ENCODE measurements at regions of chr1 and their contacts with region 1.

Region 1: DNA sequence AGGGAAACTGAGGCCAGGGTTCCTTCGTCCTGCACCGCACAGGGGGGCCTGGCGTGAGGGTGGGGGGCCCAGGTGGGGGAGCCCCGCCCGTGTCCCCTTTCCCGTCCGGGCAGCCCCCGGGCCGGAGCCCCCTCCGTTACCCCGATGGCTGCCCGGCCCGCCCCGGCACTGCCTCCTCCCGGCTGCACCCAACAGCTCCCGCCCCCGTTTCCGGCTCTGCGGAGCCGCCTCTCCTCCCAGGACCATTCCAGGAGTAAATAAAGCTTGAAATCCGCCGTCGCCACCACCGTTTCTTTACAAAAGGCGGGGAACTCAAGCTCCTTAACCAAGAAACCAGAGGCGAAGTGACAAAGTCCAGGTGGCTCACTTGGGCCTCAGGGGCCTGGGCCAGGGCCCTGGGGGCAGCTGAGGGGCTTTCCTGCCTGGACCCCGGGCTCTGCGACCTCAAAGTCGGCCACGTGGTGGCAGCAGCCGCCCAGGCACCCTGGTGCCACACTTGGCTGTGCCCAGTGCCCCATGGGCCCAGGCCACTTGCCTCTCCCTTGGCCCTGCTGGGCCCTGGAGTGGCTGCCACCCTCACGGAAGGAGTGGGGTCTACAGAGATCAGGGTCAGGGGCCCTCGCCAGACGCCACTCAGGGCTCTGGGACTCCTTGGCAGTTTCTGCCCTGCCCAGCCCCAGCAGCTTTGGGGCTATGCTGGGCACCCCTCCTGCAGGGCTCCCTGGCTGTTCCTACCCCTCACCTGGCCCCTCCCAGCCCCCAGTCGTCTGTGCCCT is 514 bp upstream of the FAAP20 start:
- DNase-seq: peak; percentile 95 to 96
- ATAC-seq: peak; percentile 89
- H3K4me3 ChIP-seq: peak overlapping the region; percentile 19 to 30
- H3K27ac ChIP-seq: peak overlapping the region; percentile 10 to 38
- H3K4me1 ChIP-seq: no peaks in the 10 kb centered on the region
- H3K27me3 ChIP-seq: no peaks in the 10 kb centered on the region

Region 2: GRCh38 chr1:2163205-2163604 is 31.9 kb before region 1 on chr1:
- intact Hi-C with region 1: no loop called
- DNase-seq: no peak
- ATAC-seq: no peak
- H3K4me3 ChIP-seq: no peak overlapping the region
- H3K27ac ChIP-seq: no peak overlapping the region
- H3K4me1 ChIP-seq: no peaks in the 10 kb centered on the region
- H3K27me3 ChIP-seq: no peaks in the 10 kb centered on the region

Region 3: DNA sequence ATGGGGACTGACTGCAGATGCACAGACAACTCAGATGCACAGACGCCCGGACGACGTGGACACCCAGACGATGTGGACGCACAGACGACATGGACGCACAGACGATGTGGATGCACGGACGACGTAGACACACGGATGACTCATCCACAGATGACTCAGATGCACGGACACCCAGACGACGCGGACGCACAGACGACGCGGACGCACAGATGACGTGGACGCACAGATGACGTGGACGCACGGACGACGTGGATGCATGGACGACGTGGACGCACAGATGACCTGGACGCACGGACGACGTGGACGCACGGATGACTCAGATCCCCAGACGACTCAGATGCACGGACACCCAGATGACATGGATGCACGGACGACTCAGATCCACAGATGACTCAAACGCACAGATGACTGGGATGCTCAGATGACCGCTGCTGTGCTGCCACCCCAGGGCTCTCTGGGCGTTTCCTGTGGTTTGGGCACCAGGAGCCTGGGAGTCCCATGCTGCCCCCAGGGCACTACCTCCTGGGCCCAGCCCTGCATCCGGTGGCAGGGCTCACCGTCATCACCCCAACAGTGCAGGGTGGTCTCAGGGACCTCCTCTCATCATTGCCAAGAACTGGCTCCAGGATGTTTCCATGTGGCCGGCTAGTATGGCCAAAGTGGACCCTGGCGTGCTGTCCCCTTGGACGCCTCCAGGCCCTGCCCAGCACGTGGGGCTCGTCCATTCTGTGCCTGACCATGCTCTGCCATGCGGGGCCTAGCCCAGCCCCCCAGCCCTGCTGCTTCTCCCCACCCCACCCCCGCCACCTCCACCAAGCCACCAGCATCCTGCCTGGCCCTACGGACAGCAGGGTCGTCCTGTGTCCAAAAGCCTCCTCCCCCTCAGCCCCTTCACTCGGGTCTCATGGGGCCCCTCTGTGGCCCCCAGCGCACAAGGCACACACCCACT is 14.5 kb before region 1 on chr1:
- intact Hi-C with region 1: no loop called
- DNase-seq: no peak
- ATAC-seq: no peak
- H3K4me3 ChIP-seq: no peak overlapping the region
- H3K27ac ChIP-seq: no peak overlapping the region
- H3K4me1 ChIP-seq: no peaks in the 10 kb centered on the region
- H3K27me3 ChIP-seq: no peaks in the 10 kb centered on the region

Region 4: GRCh38 chr1:2205191-2205952 is 10.3 kb after region 1 on chr1:
- intact Hi-C with region 1: no loop called
- DNase-seq: peak; percentile 98 to 99
- ATAC-seq: peak; percentile 81
- H3K4me3 ChIP-seq: no peak overlapping the region
- H3K27ac ChIP-seq: peak overlapping the region; percentile 58 to 88
- H3K4me1 ChIP-seq: no peaks in the 10 kb centered on the region
- H3K27me3 ChIP-seq: no peaks in the 10 kb centered on the region

Region 5: DNA sequence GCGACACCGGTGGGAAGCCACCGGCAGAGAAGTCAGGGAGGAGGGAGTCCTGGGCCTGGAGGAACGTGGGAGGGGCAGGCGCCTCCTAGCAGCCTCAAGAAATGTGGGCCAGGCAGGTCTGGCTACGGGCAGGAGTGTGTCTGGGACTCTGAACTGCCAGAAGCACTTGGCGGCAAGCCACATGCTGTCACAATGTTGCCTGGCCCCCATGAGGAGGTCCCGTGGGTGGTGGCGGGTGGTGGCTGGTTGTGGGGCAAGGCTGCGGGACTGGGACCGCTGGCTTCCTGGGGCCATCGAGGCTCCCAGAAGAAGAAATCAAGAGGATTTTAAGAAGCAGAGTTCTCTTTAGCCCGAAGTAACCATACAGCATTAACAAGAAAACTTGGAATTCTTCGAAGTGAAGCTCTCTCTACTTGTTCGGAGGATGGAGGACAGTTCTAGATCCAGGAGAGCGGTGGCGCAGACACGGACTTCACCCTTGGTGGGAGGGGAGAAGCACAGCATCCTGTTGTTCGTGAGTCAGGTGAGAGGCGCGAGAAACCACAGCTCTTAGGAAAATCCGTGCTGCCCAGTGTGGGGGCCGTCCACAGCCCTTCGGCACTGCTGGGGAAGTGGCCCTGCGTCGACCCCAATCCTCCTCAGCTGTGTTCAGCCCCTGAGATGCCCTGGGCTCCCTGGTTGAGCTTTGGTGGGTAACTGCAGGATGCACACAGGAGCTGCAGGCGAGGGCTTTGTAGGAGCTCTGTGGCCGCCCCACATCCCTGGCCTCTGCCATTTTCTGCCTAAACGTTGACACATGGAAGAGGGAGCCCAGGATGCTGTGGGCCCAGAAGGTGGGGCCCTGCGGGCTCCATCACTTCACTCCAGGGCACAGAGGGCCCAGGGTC is 45.4 kb after region 1 on chr1:
- intact Hi-C with region 1: loop called (anchors 2 to 5 kb)
- DNase-seq: peak; percentile 90 to 93
- ATAC-seq: peak; percentile 54
- H3K4me3 ChIP-seq: no peak overlapping the region
- H3K27ac ChIP-seq: peak overlapping the region in 1 of 2 donors; percentile 11
- H3K4me1 ChIP-seq: peaks cover 0 to 2% of the 10 kb centered on the region in 2 donors
- H3K27me3 ChIP-seq: no peaks in the 10 kb centered on the region

Region 6: GRCh38 chr1:2255420-2256369 is 60.6 kb after region 1 on chr1:
- intact Hi-C with region 1: no loop called
- DNase-seq: no peak
- ATAC-seq: peak; percentile 39
- H3K4me3 ChIP-seq: no peak overlapping the region
- H3K27ac ChIP-seq: peak overlapping the region in 1 of 2 donors; percentile 65
- H3K4me1 ChIP-seq: no peaks in the 10 kb centered on the region
- H3K27me3 ChIP-seq: no peaks in the 10 kb centered on the region

Region 7: DNA sequence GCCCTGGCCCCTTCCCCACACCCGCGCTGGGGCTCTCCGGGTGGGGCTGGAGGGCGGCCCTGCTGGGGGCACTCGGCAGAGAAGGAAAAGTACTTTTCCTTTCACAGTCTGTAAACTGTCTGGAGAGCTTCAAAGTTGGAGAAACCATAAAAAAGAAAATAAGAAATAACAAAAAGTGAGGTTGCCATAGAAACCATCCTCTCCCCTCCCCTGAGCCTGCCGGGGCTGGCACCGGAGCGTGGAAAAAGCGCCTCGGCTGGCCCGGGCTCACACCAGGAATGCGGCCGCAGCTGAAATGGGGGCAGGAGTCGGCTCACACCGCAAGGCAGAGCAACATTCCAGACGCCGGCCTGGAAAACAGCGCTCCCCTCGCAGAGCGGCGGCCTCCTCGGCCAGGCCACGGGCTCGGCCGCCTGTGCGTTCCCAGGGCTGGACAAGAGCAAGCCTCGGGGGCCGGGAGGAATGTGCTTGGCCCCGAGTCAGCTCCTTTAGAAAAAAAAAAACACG is 127.0 kb after region 1 on chr1:
- intact Hi-C with region 1: loop called (anchors 5 kb)
- DNase-seq: peak; percentile 94 to 96
- ATAC-seq: peak; percentile 89
- H3K4me3 ChIP-seq: no peak overlapping the region
- H3K27ac ChIP-seq: peak overlapping the region; percentile 83 to 90
- H3K4me1 ChIP-seq: no peaks in the 10 kb centered on the region
- H3K27me3 ChIP-seq: no peaks in the 10 kb centered on the region

Region 8: GRCh38 chr1:2525920-2526823 is 331.1 kb after region 1 on chr1 and contains the start of gene PANK4:
- intact Hi-C with region 1: loop called in 1 of 2 experiments (anchors 5 kb)
- DNase-seq: peak; percentile 96
- ATAC-seq: peak; percentile 93
- H3K4me3 ChIP-seq: peak within 1 kb of the TSS; percentile 43 to 81
- H3K27ac ChIP-seq: peak within 1 kb of the TSS in 1 of 2 donors; percentile 35
- H3K4me1 ChIP-seq: no peaks in the 10 kb centered on the region
- H3K27me3 ChIP-seq: no peaks in the 10 kb centered on the region
- total RNA-seq, gene PANK4: 19.6 to 28.2 TPM

Region 9: DNA sequence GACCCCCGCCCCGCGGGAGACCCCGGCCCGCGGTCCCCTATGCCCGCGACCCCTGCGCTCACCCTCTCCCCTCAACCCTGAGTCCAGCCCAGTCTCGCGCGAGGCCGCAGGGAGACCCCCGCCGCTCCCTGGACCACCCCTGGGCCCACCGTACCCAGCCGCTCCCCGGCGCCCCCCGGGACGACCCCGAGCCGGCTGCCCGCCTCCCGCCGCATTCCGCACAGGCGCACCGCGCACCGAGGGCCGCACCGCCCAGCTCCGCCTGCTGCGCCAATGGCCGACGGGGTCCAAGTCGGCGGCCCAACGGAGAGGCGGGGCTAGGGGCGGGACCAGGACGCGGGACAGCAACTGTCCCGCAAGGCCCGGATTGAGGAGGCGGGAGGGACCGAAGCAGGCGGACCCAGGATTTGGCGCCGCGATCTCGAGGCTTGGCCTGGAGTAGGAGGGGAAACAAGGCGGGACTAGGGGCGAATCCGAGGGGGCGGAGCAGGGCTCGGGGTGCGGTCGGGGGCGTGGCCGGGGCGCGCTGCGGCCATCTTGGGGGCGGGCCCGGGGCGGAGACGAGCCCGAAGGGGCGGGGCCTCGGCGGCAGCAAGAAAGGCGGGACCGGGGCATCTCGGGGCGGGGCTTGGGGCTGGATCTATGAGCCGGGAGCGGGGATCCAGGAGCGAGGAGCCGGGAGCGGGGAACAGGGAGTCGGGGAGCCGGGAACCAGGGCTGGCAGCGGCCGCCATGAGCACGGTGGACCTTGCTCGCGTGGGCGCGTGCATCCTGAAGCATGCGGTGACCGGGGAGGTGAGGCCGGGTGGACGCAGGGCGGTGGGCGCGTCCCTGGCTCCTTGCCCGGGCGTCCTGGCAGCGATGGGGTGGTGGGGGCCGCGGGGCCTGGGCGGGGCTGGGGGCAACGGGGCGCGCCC is 391.3 kb after region 1 on chr1 and contains the start of gene PRXL2B:
- intact Hi-C with region 1: loop called in 1 of 2 experiments (anchors 5 kb)
- DNase-seq: peak; percentile 100
- ATAC-seq: peak; percentile 96
- H3K4me3 ChIP-seq: peak within 1 kb of the TSS; percentile 61 to 70
- H3K27ac ChIP-seq: peak within 1 kb of the TSS; percentile 45 to 53
- H3K4me1 ChIP-seq: no peaks in the 10 kb centered on the region
- H3K27me3 ChIP-seq: no peaks in the 10 kb centered on the region
- total RNA-seq, gene PRXL2B: 7.1 to 15.1 TPM